Activated T-helper 1 cell treated with anti-CD3 and anti-CD28 coated beads, Interleukin-12 subunit alpha, Interleukin-12 subunit beta, Interleukin-2, Interleukin-4 antibody, amounts not matched to agents 30 ng/mL and 10 ng/mL and 1 ng/mL, durations not matched to agents 14 hours and 24 hours and 36 hours (primary cell): ENCODE measurements at regions of chr11 and their contacts with region 1.

Region 1: GRCh38 chr11:13462901-13463778 is at the start of gene BTBD10:
- DNase-seq: peak; percentile 92
- H3K4me3 Mint-ChIP-seq: peak within 1 kb of the TSS; percentile 99
- H3K27ac Mint-ChIP-seq: peak within 1 kb of the TSS; percentile 98
- H3K4me1 Mint-ChIP-seq: peaks cover 38% of the 10 kb centered on the region
- H3K27me3 Mint-ChIP-seq: peaks cover 3% of the 10 kb centered on the region
- total RNA-seq, gene BTBD10: 21.2 and 21.9 TPM in 2 replicates

Region 2: DNA sequence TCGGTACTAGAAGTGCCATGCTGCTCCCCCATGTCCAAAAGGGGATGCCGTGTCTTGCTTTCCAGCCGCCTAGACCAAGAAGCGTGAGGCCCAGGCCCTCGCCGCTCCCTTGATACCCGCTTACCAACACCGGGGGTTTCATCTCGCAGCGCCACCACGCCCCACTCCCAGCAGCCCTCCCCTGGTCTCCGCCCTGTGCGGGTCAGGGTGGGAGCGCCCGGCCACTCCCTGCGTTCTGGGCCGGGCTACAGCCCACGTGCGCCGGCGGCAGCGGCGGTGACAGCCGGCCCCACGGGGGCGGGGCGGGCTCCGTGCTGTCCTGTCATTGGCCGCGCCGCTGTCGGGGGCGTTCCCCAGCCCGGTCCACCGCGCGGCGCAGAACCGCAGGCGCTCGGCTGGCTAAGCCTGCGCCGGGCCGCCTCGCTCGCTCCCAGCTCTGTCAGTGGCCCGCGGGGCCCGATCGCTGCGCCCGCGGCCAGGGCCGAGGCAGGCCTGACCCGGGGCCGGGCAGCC is 1352.9 kb before region 1 on chr11 and contains the start of gene MICAL2:
- intact Hi-C with region 1: loop called (anchors 2 kb)
- DNase-seq: peak; percentile 90
- H3K4me3 Mint-ChIP-seq: peak within 1 kb of the TSS; percentile 90
- H3K27ac Mint-ChIP-seq: peak within 1 kb of the TSS; percentile 99
- H3K4me1 Mint-ChIP-seq: peaks cover 75% of the 10 kb centered on the region
- H3K27me3 Mint-ChIP-seq: no peaks in the 10 kb centered on the region
- total RNA-seq, gene MICAL2: 595 and 619 TPM in 2 replicates

Region 3: GRCh38 chr11:12963792-12964536 is 499.2 kb before region 1 on chr11:
- intact Hi-C with region 1: loop called (anchors 1 kb)
- DNase-seq: peak; percentile 21
- H3K4me3 Mint-ChIP-seq: no peak overlapping the region
- H3K27ac Mint-ChIP-seq: no peak overlapping the region
- H3K4me1 Mint-ChIP-seq: no peaks in the 10 kb centered on the region
- H3K27me3 Mint-ChIP-seq: peaks cover 15% of the 10 kb centered on the region

Region 4: GRCh38 chr11:13276832-13277767 is 186.0 kb before region 1 on chr11:
- intact Hi-C with region 1: loop called (anchors 1 kb)
- DNase-seq: peak; percentile 98
- H3K4me3 Mint-ChIP-seq: peak overlapping the region; percentile 98
- H3K27ac Mint-ChIP-seq: peak overlapping the region; percentile 80
- H3K4me1 Mint-ChIP-seq: peaks cover 52% of the 10 kb centered on the region
- H3K27me3 Mint-ChIP-seq: peaks cover 46% of the 10 kb centered on the region

Region 5: GRCh38 chr11:13668102-13668956 is 205.2 kb after region 1 on chr11 and contains the start of gene FAR1:
- intact Hi-C with region 1: loop called (anchors 1 kb)
- DNase-seq: peak; percentile 97
- H3K4me3 Mint-ChIP-seq: peak within 1 kb of the TSS; percentile 98
- H3K27ac Mint-ChIP-seq: peak within 1 kb of the TSS; percentile 99
- H3K4me1 Mint-ChIP-seq: peaks cover 42% of the 10 kb centered on the region
- H3K27me3 Mint-ChIP-seq: peaks cover 17% of the 10 kb centered on the region
- total RNA-seq, gene FAR1: 67.3 and 67.4 TPM in 2 replicates

Region 6: DNA sequence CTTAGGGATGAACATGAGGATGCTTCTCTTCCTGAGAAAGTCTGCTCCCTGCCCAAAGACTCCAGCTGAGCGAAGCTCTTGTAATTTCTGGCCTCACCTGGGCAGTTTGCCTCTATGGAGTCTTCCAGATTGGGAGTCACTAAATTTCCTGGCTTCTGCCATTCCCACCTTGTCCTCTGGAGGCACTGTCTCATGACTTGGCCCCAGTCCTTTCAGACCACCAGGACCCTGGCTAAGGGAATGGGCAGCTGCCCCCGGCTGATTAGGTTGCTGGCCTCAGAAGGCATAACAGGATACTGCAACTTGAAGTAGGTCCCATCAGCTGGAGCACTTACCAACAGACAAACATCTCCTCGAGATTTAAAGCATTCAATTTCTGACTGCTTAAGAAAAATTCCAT is 371.3 kb after region 1 on chr11:
- intact Hi-C with region 1: no loop called
- DNase-seq: no peak
- H3K4me3 Mint-ChIP-seq: no peak overlapping the region
- H3K27ac Mint-ChIP-seq: no peak overlapping the region
- H3K4me1 Mint-ChIP-seq: no peaks in the 10 kb centered on the region
- H3K27me3 Mint-ChIP-seq: peaks cover 4% of the 10 kb centered on the region

Region 7: GRCh38 chr11:14499554-14500180 is 1036.5 kb after region 1 on chr11 and contains the start of gene COPB1:
- intact Hi-C with region 1: loop called (anchors 10 kb)
- DNase-seq: peak; percentile 90
- H3K4me3 Mint-ChIP-seq: peak within 1 kb of the TSS; percentile 100
- H3K27ac Mint-ChIP-seq: peak within 1 kb of the TSS; percentile 98
- H3K4me1 Mint-ChIP-seq: peaks cover 49% of the 10 kb centered on the region
- H3K27me3 Mint-ChIP-seq: no peaks in the 10 kb centered on the region
- total RNA-seq, gene COPB1: 94.8 and 101 TPM in 2 replicates